Posterior cingulate gyrus (tissue), 11 donors: ENCODE measurements at regions of chr10 and their contacts with region 1.

Region 1: GRCh38 chr10:127150136-127150535 is 46.3 kb downstream of the INSYN2A start:
- DNase-seq: no peak

Region 2: GRCh38 chr10:127193125-127193524 is 43.0 kb after region 1 on chr10:
- intact Hi-C with region 1: loop called (anchors 5 kb)
- DNase-seq: no peak